HepG2 (cell line): ENCODE measurements at regions of chr17 and their contacts with region 1.

Region 1: GRCh38 chr17:55285340-55286301 is 20.9 kb downstream of the HLF start:
- DNase-seq: peak; percentile 99
- ATAC-seq: peak; percentile 37
- H3K4me3 ChIP-seq: peak overlapping the region; percentile 1 to 63 (median 3); a peak in 4 of 6 replicates
- H3K27ac ChIP-seq: peak overlapping the region; percentile 98
- H3K4me1 ChIP-seq: peaks cover 100% of the 10 kb centered on the region
- H3K27me3 ChIP-seq: no peaks in the 10 kb centered on the region
- CTCF ChIP-seq: no peak
- EP300 ChIP-seq: peak; percentile 82 to 100; a peak in 3 of 4 replicates
- POLR2A ChIP-seq: peak; percentile 46 to 71
- RAD21 ChIP-seq: no peak; the same call in 1 of the 2 replicates

Region 2: GRCh38 chr17:55067697-55068439 is 217.8 kb before region 1 on chr17:
- CTCF ChIA-PET with region 1: no interaction called
- POLR2A ChIA-PET with region 1: interaction called, 15 read pairs
- in situ Hi-C with region 1: no loop called
- intact Hi-C with region 1: no loop called
- DNase-seq: peak; percentile 9
- ATAC-seq: no peak
- H3K4me3 ChIP-seq: peak overlapping the region in 1 of 3 experiments; percentile 15; a peak in 1 of 6 replicates
- H3K27ac ChIP-seq: peak overlapping the region; percentile 93
- H3K4me1 ChIP-seq: peaks cover 33% of the 10 kb centered on the region
- H3K27me3 ChIP-seq: no peaks in the 10 kb centered on the region
- CTCF ChIP-seq: no peak
- EP300 ChIP-seq: no peak
- POLR2A ChIP-seq: no peak
- RAD21 ChIP-seq: no peak

Region 3: GRCh38 chr17:55224746-55225145 is 60.9 kb before region 1 on chr17:
- CTCF ChIA-PET with region 1: no interaction called
- POLR2A ChIA-PET with region 1: no interaction called
- in situ Hi-C with region 1: no loop called
- intact Hi-C with region 1: no loop called
- DNase-seq: no peak
- ATAC-seq: no peak
- H3K4me3 ChIP-seq: no peak overlapping the region
- H3K27ac ChIP-seq: no peak overlapping the region
- H3K4me1 ChIP-seq: peaks cover 5% of the 10 kb centered on the region
- H3K27me3 ChIP-seq: peaks cover 0 to 1% of the 10 kb centered on the region in 2 experiments; a peak in 2 of 5 replicates
- CTCF ChIP-seq: no peak
- EP300 ChIP-seq: no peak
- POLR2A ChIP-seq: no peak
- RAD21 ChIP-seq: no peak

Region 4: DNA sequence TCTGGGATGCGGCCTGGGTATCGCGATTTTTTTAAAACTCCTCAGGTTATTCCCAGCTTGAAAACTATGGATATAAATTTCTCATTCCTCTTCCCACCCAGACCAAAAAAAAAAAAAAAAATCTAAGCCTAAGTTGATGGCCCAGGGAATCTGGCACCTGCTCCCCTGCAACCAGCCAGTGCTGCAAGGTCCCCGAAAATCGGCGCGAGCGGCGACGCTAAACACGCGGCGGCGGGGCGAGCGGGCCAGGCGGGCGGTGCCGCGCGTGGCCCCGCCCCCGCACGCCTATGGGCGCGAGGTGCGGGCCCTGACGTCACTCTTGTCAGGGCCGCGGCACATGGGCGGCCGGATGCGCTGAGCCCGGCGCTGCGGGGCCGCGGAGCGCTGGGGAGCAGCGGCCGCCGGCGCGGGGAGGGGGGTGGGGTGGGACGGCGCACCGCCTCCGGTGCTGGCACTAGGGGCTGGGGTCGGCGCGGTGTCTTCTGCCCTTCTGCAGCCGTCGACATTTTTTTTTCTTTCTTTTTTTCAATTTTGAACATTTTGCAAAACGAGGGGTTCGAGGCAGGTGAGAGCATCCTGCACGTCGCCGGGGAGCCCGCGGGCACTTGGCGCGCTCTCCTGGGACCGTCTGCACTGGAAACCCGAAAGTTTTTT is 20.8 kb before region 1 on chr17 and contains the start of gene HLF:
- CTCF ChIA-PET with region 1: no interaction called
- POLR2A ChIA-PET with region 1: interaction called, 626 read pairs
- in situ Hi-C with region 1: no loop called
- intact Hi-C with region 1: loop called (anchors 2 kb)
- DNase-seq: peak; percentile 76
- ATAC-seq: peak; percentile 86
- H3K4me3 ChIP-seq: peak within 1 kb of the TSS; percentile 81 to 93 (median 83)
- H3K27ac ChIP-seq: peak within 1 kb of the TSS; percentile 84
- H3K4me1 ChIP-seq: peaks cover 15% of the 10 kb centered on the region
- H3K27me3 ChIP-seq: no peaks in the 10 kb centered on the region; a peak in 1 of 5 replicates
- CTCF ChIP-seq: peak; percentile 4; the same call in 1 of the 2 replicates
- EP300 ChIP-seq: peak; percentile 40 to 58; a peak in 2 of 4 replicates
- POLR2A ChIP-seq: peak; percentile 50 to 87; a peak in 3 of 4 replicates
- RAD21 ChIP-seq: peak; percentile 50
- total RNA-seq, gene HLF: 197 and 202 TPM in 2 replicates

Region 5: DNA sequence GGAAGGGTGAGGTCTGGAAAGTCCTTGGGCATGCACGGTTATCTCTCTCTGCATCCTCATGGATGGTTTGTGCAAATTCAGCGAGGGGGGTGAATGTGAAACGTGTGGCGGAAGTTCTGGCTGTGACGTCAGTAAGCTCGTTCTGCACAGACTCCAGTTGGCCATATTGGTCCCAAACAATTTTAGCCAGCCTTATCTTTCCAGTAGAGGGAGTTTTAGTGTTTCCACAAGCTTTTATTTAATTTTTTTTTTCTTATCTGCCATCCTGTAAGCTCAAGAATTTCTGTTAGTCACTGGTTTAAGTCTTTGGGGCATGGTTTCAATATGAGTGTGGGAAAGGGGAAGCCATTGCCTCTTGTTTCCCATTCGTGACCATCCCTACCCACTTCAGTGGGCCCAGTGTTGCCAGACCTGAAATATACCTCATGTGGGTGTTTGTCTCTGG is 18.1 kb after region 1 on chr17:
- CTCF ChIA-PET with region 1: no interaction called
- POLR2A ChIA-PET with region 1: interaction called, 119 read pairs
- in situ Hi-C with region 1: no loop called
- intact Hi-C with region 1: loop called (anchors 1 kb)
- DNase-seq: no peak
- ATAC-seq: no peak
- H3K4me3 ChIP-seq: no peak overlapping the region; a peak in 1 of 6 replicates
- H3K27ac ChIP-seq: peak overlapping the region; percentile 86
- H3K4me1 ChIP-seq: peaks cover 100% of the 10 kb centered on the region
- H3K27me3 ChIP-seq: no peaks in the 10 kb centered on the region
- CTCF ChIP-seq: peak; percentile 4; the same call in 1 of the 2 replicates
- EP300 ChIP-seq: no peak
- POLR2A ChIP-seq: no peak; a peak in 2 of 4 replicates
- RAD21 ChIP-seq: no peak

Region 6: DNA sequence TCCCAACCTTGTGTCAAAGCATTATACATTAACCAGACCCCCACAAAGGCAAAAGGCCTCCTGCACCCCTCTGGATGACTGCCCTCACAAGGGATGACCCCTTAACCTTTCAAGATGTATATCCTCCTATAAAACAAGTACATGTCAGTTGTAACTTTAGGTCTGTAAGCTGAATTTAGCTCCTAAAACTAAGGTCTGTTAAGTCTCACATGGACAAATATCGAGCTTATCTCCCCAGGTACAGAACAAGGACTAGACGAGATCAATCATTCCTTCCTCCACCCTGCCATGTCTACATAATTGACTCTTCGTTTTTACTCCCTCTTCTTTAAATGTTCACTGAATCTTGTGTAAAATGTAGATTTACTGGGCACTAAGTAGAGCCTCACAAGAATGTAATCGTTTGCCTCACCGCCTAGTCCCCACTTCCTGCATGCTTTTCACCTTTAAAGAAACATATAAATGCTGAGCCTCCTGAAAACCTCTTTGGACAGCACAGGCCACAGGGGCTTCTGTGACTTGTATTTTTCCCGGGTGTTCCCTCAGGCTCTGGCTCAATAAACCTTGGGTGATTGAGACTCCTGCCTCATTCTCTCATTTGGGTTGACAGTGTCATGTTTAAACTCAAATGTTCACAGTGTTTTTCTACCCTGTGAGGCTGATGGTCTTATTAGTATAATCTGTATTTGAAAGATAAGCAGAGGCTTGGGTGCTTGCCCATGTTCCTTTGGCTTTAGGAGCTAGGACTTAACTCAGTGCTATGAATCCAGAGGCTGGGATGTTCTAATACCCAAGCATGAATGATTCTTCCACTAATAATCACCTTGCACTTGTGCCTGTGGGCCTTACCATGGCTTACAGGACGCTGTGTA is 98.4 kb after region 1 on chr17:
- CTCF ChIA-PET with region 1: no interaction called
- POLR2A ChIA-PET with region 1: no interaction called
- in situ Hi-C with region 1: no loop called
- intact Hi-C with region 1: no loop called
- DNase-seq: no peak
- ATAC-seq: no peak; the same call in 2 of the 3 replicates
- H3K4me3 ChIP-seq: no peak overlapping the region
- H3K27ac ChIP-seq: no peak overlapping the region
- H3K4me1 ChIP-seq: peaks cover 29% of the 10 kb centered on the region
- H3K27me3 ChIP-seq: no peaks in the 10 kb centered on the region; a peak in 1 of 5 replicates
- CTCF ChIP-seq: no peak
- EP300 ChIP-seq: no peak
- POLR2A ChIP-seq: no peak
- RAD21 ChIP-seq: no peak

Region 7: DNA sequence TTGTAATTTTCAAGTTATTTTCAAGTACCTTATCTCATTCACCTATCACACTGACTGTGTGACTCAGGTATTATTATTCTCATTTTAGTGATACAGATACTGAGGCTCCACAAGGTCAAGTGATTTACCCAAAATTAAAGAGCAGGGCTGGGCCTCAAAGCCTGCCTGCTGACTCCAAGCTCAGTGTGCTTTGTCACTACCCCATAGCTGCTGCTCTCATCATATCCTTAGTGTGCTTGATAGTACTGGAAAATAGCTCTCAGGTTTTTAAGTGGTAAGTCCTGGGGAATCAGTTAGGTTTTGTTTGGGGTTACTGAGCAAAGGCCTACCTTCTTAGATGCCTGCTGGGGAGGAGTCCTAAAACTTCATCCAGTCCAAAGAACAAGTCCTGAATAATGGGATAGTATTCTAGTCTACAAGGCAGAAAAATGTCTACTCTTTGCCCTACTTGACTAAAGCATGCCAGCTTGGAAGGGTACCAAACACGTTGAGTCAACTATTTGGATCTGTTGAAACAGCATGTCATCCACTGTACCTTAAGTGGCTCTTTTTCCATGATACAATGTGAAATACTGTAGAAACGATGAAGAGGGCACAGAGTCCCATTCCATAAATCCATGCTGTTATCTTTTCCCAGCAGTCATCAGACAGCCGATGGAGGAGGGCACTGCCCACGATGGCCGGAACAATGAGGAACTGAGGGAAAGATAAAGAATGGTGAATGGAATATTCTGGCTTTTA is 125.3 kb after region 1 on chr17:
- CTCF ChIA-PET with region 1: no interaction called
- POLR2A ChIA-PET with region 1: interaction called, 11 read pairs
- in situ Hi-C with region 1: no loop called
- intact Hi-C with region 1: no loop called
- DNase-seq: peak; percentile 55
- ATAC-seq: no peak
- H3K4me3 ChIP-seq: no peak overlapping the region
- H3K27ac ChIP-seq: peak overlapping the region; percentile 87
- H3K4me1 ChIP-seq: peaks cover 100% of the 10 kb centered on the region
- H3K27me3 ChIP-seq: no peaks in the 10 kb centered on the region
- CTCF ChIP-seq: no peak
- EP300 ChIP-seq: 0 out of 4 replicates have a peak, but pooled peaks of 1 of the 2 experiments have one; percentile 31
- POLR2A ChIP-seq: no peak; a peak in 1 of 4 replicates
- RAD21 ChIP-seq: no peak

Region 8: GRCh38 chr17:55444471-55445441 is 159.1 kb after region 1 on chr17:
- CTCF ChIA-PET with region 1: no interaction called
- POLR2A ChIA-PET with region 1: interaction called, 29 read pairs
- in situ Hi-C with region 1: no loop called
- intact Hi-C with region 1: loop called (anchors 2 kb)
- DNase-seq: peak; percentile 91
- ATAC-seq: peak; percentile 63
- H3K4me3 ChIP-seq: peak overlapping the region in 1 of 3 experiments; percentile 24; a peak in 1 of 6 replicates
- H3K27ac ChIP-seq: peak overlapping the region; percentile 88
- H3K4me1 ChIP-seq: peaks cover 94% of the 10 kb centered on the region
- H3K27me3 ChIP-seq: no peaks in the 10 kb centered on the region
- CTCF ChIP-seq: 0 out of 2 replicates have a peak, but pooled peaks have one; percentile 5
- EP300 ChIP-seq: peak in 1 of 2 experiments; percentile 64; a peak in 2 of 4 replicates
- POLR2A ChIP-seq: peak in 1 of 2 experiments; percentile 30; a peak in 3 of 4 replicates
- RAD21 ChIP-seq: no peak